ENCODE measurements at regions of chr1 and their contacts with region 1.

Region 1: DNA sequence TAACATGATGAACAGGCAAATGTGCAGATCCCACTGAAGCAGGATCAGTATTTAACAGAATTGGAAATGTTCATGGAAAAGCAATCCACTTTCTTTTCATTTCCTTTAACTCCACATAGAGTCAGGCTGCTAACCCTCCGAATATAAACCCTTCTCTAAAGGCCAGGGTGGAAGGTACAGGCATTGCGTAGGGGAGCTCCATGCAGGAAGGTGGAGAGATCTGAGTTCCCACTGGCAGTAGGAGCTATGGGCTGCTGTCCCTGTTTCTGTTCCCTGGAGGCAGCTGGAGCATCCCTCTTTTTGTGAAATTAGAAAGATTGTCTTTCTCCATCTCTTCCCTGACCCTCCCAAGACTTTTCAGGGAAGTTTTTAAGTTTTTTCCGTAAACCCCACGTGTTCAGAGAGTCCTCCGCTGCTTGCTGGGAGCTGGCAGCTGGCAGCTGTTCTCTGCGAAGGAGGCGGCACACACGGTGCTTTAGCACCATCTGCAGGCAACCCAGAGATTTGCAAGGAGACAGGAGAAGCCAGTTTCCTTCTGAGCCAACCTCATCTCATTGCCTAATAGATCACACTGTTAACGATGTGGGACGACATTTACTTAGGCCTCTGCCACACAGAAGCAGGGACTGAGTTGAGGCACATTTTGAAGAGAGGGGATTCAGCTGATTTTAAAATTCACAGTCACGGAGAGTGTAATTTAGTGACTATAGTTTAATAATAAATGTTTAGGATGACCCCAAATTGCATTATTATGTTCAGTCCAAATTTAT is 55.4 kb upstream of the HOOK1 start:
- DNase-seq: peak; percentile 67 to 77
- H3K4me3 ChIP-seq: peak overlapping the region; percentile 31; the same call in 1 of the 2 replicates
- H3K27ac ChIP-seq: no peak overlapping the region
- H3K4me1 ChIP-seq: peaks cover 5% of the 10 kb centered on the region
- H3K27me3 ChIP-seq: no peaks in the 10 kb centered on the region
- CTCF ChIP-seq: peak; percentile 97

Region 2: GRCh38 chr1:58515794-58516401 is 1243.4 kb before region 1 on chr1:
- CTCF ChIA-PET with region 1: no interaction called
- POLR2A ChIA-PET with region 1: no interaction called
- intact Hi-C with region 1: loop called (anchors 1 kb)
- DNase-seq: peak; percentile 25 to 61
- H3K4me3 ChIP-seq: no peak overlapping the region
- H3K27ac ChIP-seq: no peak overlapping the region
- H3K4me1 ChIP-seq: no peaks in the 10 kb centered on the region
- H3K27me3 ChIP-seq: no peaks in the 10 kb centered on the region
- CTCF ChIP-seq: peak; percentile 86

Region 3: GRCh38 chr1:58652651-58653184 is 1106.6 kb before region 1 on chr1:
- CTCF ChIA-PET with region 1: interaction called, 3 read pairs
- POLR2A ChIA-PET with region 1: no interaction called
- intact Hi-C with region 1: loop called (anchors 5 kb)
- DNase-seq: peak; percentile 62 to 76
- H3K4me3 ChIP-seq: no peak overlapping the region
- H3K27ac ChIP-seq: peak overlapping the region; percentile 24
- H3K4me1 ChIP-seq: 0 out of 2 replicates have a peak, but pooled peaks cover 5% of the 10 kb centered on the region
- H3K27me3 ChIP-seq: no peaks in the 10 kb centered on the region
- CTCF ChIP-seq: peak; percentile 93

Region 4: GRCh38 chr1:58664881-58665280 is 1094.5 kb before region 1 on chr1:
- CTCF ChIA-PET with region 1: no interaction called
- POLR2A ChIA-PET with region 1: no interaction called
- intact Hi-C with region 1: loop called (anchors 5 kb)
- DNase-seq: no peak
- H3K4me3 ChIP-seq: no peak overlapping the region
- H3K27ac ChIP-seq: no peak overlapping the region
- H3K4me1 ChIP-seq: no peaks in the 10 kb centered on the region
- H3K27me3 ChIP-seq: no peaks in the 10 kb centered on the region
- CTCF ChIP-seq: no peak

Region 5: GRCh38 chr1:58739856-58740466 is 1019.4 kb before region 1 on chr1:
- CTCF ChIA-PET with region 1: no interaction called
- POLR2A ChIA-PET with region 1: no interaction called
- intact Hi-C with region 1: loop called (anchors 1 kb)
- DNase-seq: peak in 1 of 2 experiments; percentile 56
- H3K4me3 ChIP-seq: no peak overlapping the region
- H3K27ac ChIP-seq: no peak overlapping the region
- H3K4me1 ChIP-seq: peaks cover 12% of the 10 kb centered on the region
- H3K27me3 ChIP-seq: no peaks in the 10 kb centered on the region
- CTCF ChIP-seq: peak; percentile 95

Region 6: GRCh38 chr1:58791106-58791505 is 968.2 kb before region 1 on chr1:
- CTCF ChIA-PET with region 1: no interaction called
- POLR2A ChIA-PET with region 1: no interaction called
- intact Hi-C with region 1: no loop called
- DNase-seq: no peak
- H3K4me3 ChIP-seq: no peak overlapping the region
- H3K27ac ChIP-seq: no peak overlapping the region
- H3K4me1 ChIP-seq: peaks cover 24% of the 10 kb centered on the region
- H3K27me3 ChIP-seq: no peaks in the 10 kb centered on the region
- CTCF ChIP-seq: no peak

Region 7: DNA sequence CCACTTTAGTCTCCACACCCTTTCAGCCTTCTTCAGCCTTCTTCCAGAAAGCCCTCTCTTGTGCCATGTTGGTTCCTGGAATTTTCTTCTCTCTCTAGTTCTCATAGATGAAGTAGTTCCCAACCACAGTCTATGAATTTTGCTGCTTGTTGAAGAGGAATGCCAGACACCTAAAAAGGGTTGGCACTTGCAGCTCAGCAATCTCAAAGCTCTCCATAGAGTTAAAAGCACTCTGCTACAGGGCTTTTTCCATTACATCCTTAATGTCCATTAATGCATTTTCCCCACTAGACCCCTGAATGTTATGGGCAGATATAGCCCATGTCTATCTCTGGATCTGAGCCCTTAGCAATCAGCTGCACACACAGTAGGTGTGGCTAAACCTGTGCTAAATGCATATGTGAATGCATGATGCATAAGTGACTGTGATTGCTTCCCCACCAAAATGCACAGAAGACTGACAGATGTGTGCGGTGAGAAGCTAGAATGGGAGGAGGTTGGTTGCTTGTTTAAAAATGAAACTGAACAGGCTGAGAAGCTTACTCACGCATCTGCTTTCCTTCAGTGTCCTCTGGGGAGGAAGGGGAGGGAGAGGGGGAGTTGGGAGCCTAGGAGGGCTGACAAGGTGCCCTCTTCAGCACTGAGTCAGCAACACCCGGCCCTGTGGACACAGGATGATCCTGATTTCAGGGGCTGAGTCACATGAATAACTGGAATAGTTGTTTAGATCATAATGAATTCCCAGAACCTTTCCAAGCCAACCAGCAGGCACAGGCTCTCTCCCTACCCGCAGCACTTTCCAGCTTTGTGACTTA is 608.6 kb before region 1 on chr1:
- CTCF ChIA-PET with region 1: no interaction called
- POLR2A ChIA-PET with region 1: no interaction called
- intact Hi-C with region 1: loop called (anchors 1 kb)
- DNase-seq: peak; percentile 82 to 92
- H3K4me3 ChIP-seq: peak overlapping the region; percentile 48
- H3K27ac ChIP-seq: peak overlapping the region; percentile 72
- H3K4me1 ChIP-seq: peaks cover 66% of the 10 kb centered on the region
- H3K27me3 ChIP-seq: no peaks in the 10 kb centered on the region
- CTCF ChIP-seq: no peak

Region 8: GRCh38 chr1:59290193-59290947 is 469.0 kb before region 1 on chr1:
- CTCF ChIA-PET with region 1: no interaction called
- POLR2A ChIA-PET with region 1: no interaction called
- intact Hi-C with region 1: loop called (anchors 2 kb)
- DNase-seq: peak; percentile 40 to 54
- H3K4me3 ChIP-seq: no peak overlapping the region
- H3K27ac ChIP-seq: no peak overlapping the region
- H3K4me1 ChIP-seq: peaks cover 12% of the 10 kb centered on the region
- H3K27me3 ChIP-seq: no peaks in the 10 kb centered on the region
- CTCF ChIP-seq: peak; percentile 39; the same call in 1 of the 2 replicates